Heart right ventricle (tissue), 16 donors: ENCODE measurements at regions of chr15 and their contacts with region 1.

Region 1: GRCh38 chr15:29062179-29062591 is 176.4 kb downstream of the APBA2 start:
- DNase-seq: no peak
- ATAC-seq: no peak
- H3K4me3 ChIP-seq: no peak overlapping the region
- H3K27ac ChIP-seq: no peak overlapping the region
- H3K4me1 ChIP-seq: no peaks in the 10 kb centered on the region
- H3K27me3 ChIP-seq: peaks cover 0 to 7% (median 0%) of the 10 kb centered on the region in 7 donors
- CTCF ChIP-seq: no peak

Region 2: GRCh38 chr15:28984421-28985315 is 77.5 kb before region 1 on chr15:
- intact Hi-C with region 1: no loop called
- DNase-seq: no peak
- ATAC-seq: peak in 3 of 8 donors; percentile 14 to 47 (median 20)
- H3K4me3 ChIP-seq: no peak overlapping the region
- H3K27ac ChIP-seq: no peak overlapping the region
- H3K4me1 ChIP-seq: no peaks in the 10 kb centered on the region
- H3K27me3 ChIP-seq: peaks cover 0 to 3% (median 0%) of the 10 kb centered on the region in 7 donors
- CTCF ChIP-seq: no peak

Region 3: GRCh38 chr15:29003191-29003839 is 58.9 kb before region 1 on chr15:
- intact Hi-C with region 1: loop called in 1 of 10 experiments (anchors 10 kb)
- DNase-seq: no peak
- ATAC-seq: no peak
- H3K4me3 ChIP-seq: no peak overlapping the region
- H3K27ac ChIP-seq: no peak overlapping the region
- H3K4me1 ChIP-seq: no peaks in the 10 kb centered on the region
- H3K27me3 ChIP-seq: peaks cover 0 to 7% (median 0%) of the 10 kb centered on the region in 7 donors
- CTCF ChIP-seq: no peak

Region 4: DNA sequence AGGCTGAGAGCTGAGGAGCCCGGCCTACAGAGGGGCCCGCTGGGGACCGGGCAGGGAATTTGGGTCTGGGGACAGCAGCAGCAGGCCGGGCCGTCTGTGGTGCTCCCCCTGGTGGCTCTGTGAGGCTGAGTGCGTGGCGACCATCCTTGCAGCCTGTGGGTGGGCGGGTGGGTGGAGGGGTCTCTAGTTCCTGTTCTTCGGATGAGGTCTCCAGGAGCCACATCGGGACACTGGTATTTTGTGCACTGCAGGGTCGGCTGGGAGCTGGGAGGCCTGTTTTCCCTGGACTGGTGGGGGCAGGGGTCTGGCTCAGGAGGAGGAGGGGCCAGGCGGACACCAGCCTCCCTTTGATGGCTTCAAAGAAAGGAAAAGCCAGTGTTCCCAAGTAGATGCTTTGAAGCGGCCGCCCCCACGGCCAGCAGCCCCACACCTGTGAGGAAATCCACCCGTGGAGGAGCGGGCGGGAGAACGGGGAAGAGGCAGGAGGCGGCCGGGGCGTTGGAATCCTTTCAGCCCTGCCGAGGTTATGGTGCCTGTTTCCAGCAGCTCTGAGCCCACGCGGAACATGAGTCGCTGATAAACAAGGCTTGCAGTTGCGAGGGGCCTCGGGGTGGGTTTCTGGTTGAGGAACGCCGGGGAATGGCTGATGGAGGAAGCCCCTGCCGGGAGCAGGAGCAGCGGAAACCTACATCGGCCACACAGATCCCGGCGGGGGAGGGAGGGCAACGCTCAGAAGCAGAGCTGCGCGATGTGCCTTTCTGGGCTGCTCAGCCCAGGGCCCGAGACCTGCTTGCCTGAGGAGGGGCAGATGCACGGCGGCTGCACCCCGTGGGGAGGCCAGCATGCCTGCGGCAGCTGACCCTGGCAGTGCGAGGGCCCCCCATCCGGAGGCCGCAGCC is 53.2 kb after region 1 on chr15:
- intact Hi-C with region 1: no loop called
- DNase-seq: no peak
- ATAC-seq: peak in 2 of 8 donors; percentile 25 to 30
- H3K4me3 ChIP-seq: peak overlapping the region in 9 of 10 donors; percentile 16 to 52 (median 38)
- H3K27ac ChIP-seq: no peak overlapping the region
- H3K4me1 ChIP-seq: peaks cover 0 to 11% (median 8%) of the 10 kb centered on the region in 9 donors
- H3K27me3 ChIP-seq: peaks cover 0 to 55% (median 42%) of the 10 kb centered on the region in 7 donors
- CTCF ChIP-seq: peak in 7 of 9 donors; percentile 26 to 48 (median 39)

Region 5: DNA sequence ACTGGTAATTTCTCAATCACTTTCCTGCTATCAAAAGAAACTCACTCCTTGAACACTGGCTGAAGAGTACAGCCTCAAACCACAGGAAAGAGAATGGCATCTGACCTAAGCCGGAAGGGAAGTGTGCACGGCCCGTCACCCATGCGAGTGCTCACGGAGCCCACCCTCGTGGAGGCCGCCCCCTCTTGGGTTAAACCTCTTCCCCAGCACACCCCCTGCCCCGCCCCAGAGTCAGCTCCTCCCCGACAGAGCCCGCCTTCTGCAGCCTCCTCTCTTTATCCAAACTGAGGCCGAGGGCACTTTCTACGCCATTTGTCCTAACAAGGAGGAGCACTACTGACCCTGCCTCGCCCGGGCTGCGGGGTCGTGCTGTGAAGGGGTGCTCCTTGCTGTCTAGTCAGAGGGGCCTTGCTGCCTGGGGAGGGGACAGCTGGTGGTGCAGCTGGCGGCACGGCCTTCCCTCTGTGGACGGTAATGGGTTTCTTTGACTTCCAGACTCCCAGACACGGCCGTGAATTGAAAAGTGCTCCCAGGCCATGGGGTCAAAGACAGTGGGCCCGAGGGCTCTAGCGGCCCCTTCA is 69.7 kb after region 1 on chr15:
- intact Hi-C with region 1: no loop called
- DNase-seq: no peak
- ATAC-seq: no peak
- H3K4me3 ChIP-seq: no peak overlapping the region
- H3K27ac ChIP-seq: no peak overlapping the region
- H3K4me1 ChIP-seq: no peaks in the 10 kb centered on the region
- H3K27me3 ChIP-seq: peaks cover 0 to 29% (median 19%) of the 10 kb centered on the region in 7 donors
- CTCF ChIP-seq: no peak

Region 6: DNA sequence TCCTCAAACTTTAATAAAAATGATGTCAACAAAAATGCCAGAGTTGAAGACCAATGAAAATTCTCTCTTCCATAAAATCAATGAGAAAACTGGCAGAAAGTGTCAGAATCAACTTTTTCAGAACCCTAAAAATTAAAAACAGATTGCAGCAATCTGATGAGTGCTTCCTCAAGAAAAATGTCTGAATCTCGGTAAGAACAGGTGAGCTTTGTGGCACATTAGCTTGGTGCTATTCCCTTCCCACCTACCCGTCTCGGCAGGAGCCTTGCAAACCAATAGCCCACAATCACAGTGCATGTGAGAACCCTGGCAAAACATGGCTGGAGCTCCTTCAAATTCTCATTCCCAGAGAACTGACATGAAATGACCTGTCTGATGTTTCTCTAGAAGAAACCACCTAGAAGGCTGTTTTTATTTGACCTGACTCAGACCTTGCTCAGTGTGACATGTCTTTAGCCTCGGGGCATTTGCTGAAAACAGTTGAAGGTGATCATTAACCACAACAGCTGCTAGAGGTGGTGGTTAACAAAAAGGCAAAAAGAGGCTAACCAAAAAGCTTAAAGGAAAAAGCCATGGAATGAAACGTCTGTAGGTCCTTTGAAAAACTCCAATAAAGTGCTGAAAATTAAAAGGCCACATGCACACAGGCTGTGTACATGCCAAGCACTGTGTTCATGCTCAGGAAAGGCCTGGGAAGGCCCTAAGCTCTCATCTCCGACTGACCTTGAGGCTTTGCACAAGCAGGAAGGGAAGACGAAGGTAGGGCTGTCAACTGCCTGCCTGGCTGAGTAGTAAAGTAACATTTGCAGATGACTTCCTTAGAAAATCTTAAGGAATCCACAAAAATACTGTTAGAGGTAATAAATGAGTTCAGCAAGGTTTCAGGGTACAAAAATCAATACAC is 460.4 kb after region 1 on chr15:
- intact Hi-C with region 1: no loop called
- DNase-seq: no peak
- ATAC-seq: no peak
- H3K4me3 ChIP-seq: no peak overlapping the region
- H3K27ac ChIP-seq: no peak overlapping the region
- H3K4me1 ChIP-seq: peaks cover 0 to 9% (median 0%) of the 10 kb centered on the region in 9 donors
- H3K27me3 ChIP-seq: peaks cover 0 to 4% (median 0%) of the 10 kb centered on the region in 7 donors
- CTCF ChIP-seq: no peak